Heart left ventricle (tissue), 16 donors: ENCODE measurements at regions of chrX and their contacts with region 1.

Region 1: DNA sequence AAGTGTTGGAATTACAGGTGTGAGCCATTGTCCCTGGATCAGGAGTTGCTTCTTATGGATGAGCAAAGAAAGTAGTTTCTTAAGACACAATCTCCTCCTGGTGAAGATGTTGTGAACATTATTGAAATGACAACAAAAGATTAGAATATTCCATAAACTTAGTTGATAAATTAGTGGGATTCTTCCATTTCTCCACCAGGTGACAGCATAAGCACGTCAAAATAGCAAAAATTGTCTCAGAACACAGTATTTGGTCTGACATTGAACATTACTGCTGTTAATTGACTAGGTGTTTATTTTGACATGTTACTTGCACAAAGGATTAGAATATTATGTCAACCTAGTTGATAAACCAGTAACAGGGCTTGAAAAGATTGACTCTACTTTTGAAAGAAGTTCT is 21.6 kb downstream of the CLDN34 start:
- DNase-seq: no peak
- ATAC-seq: no peak
- H3K4me3 ChIP-seq: no peak overlapping the region
- H3K27ac ChIP-seq: no peak overlapping the region
- H3K4me1 ChIP-seq: no peaks in the 10 kb centered on the region
- H3K27me3 ChIP-seq: no peaks in the 10 kb centered on the region
- CTCF ChIP-seq: peak in 11 of 12 donors; percentile 11 to 48 (median 34)
- POLR2A ChIP-seq: no peak

Region 2: DNA sequence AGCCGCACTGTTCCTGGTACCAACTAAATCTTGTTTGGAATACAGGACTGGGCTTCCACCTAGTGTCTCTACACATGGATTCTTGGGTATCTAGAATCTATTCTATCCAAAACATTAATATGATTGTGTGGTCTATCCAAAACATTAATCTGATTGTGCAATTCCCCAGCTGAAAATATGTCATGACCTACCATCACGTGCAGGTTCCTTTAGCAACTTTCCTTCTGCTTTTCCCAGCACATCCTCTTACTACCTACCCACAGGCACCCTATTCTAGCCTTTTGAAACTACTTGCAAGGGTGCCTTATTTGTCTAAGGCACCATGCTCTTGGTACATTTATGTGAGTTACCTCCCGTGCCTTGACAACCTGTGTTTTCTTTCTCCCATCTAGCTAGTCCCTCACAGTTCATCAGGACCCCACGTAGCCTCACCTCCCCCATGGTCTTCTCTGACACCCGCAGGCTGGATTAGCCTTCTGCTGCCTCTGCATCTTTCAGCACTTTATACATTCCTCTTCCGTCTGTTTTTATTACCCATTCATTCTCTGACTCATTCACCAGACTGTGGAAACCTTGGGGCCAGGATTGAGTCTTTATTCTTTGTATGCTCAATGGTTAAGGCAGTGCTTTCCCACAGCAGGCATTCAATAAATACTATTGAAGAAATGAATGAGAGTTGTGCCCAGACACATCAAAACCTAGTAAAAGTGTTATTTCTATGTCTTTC is 866.1 kb before region 1 on chrX:
- intact Hi-C with region 1: loop called in 1 of 10 experiments (anchors 10 kb)
- DNase-seq: no peak
- ATAC-seq: no peak
- H3K4me3 ChIP-seq: no peak overlapping the region
- H3K27ac ChIP-seq: no peak overlapping the region
- H3K4me1 ChIP-seq: no peaks in the 10 kb centered on the region
- H3K27me3 ChIP-seq: peaks cover 0 to 9% (median 0%) of the 10 kb centered on the region in 9 donors
- CTCF ChIP-seq: no peak
- POLR2A ChIP-seq: no peak

Region 3: DNA sequence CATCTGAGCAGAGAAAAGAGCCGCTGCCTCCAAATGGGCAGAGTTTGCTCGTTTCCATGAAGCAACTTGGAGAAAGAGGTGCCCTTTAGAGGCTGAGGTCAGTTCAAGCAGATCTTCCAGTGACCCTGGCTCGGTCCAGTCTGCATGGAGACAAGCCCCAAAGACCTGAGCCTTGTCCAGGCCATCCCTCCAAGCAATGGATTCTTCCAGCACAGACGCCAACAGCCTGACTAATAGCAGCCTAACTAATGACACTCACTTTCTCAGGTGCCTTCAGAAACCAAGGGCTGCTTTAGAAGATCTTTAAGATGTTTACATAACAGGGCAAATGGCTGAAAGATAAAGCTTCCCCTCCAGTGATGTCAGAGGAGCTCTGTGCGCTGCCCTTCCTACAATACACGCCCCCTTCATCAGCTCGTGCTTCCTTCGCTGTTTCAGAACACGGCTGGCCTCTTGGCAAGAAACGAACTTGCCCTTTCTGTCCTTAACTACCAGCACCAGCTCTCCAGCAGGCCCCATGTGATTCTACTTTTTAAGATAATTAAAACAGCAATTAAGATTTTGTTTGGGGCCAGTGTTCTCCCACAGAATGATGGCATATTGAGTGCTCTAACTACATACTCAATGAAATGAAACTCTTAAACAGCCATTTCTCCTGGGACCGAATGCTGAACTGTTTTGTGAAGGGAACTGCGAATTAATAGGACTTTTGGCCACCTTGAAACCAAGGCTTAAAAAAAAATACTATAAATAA is 342.1 kb before region 1 on chrX:
- intact Hi-C with region 1: no loop called
- DNase-seq: peak in 1 of 5 donors; percentile 19
- ATAC-seq: peak; percentile 65 to 75 (median 72)
- H3K4me3 ChIP-seq: no peak overlapping the region
- H3K27ac ChIP-seq: peak overlapping the region in 9 of 12 donors; percentile 3 to 57 (median 24)
- H3K4me1 ChIP-seq: peaks cover 0 to 27% (median 6%) of the 10 kb centered on the region in 12 donors
- H3K27me3 ChIP-seq: peaks cover 0 to 8% (median 0%) of the 10 kb centered on the region in 9 donors
- CTCF ChIP-seq: no peak
- POLR2A ChIP-seq: no peak

Region 4: GRCh38 chrX:9816094-9816700 is 172.6 kb before region 1 on chrX:
- intact Hi-C with region 1: no loop called
- DNase-seq: no peak
- ATAC-seq: peak in 1 of 4 donors; percentile 28
- H3K4me3 ChIP-seq: no peak overlapping the region
- H3K27ac ChIP-seq: no peak overlapping the region
- H3K4me1 ChIP-seq: no peaks in the 10 kb centered on the region
- H3K27me3 ChIP-seq: no peaks in the 10 kb centered on the region
- CTCF ChIP-seq: no peak
- POLR2A ChIP-seq: no peak

Region 5: DNA sequence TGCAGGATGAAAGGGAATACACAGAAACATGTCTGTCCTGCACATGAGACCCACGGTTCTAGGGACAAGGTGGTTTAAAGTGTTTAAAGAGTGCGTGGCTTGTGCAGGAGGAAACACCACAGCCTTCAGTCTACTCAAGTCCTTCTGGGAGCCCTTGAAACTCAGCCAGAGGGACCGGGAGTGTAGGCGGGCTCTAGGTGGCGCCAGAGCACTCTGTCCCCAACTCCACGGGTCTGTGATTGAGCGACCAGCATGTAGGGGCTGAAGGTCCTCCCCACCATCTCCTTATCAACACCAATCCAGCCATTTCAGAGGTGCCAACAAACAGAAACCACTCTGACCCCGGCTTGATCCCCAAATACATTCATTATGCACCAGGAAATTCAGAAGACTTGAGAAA is 103.6 kb before region 1 on chrX:
- intact Hi-C with region 1: loop called in 6 of 10 experiments (anchors 10 kb)
- DNase-seq: peak; percentile 29 to 75 (median 56)
- ATAC-seq: peak in 3 of 4 donors; percentile 67 to 78 (median 73)
- H3K4me3 ChIP-seq: no peak overlapping the region
- H3K27ac ChIP-seq: no peak overlapping the region
- H3K4me1 ChIP-seq: peaks cover 0 to 10% (median 0%) of the 10 kb centered on the region in 12 donors
- H3K27me3 ChIP-seq: peaks cover 0 to 25% (median 0%) of the 10 kb centered on the region in 9 donors
- CTCF ChIP-seq: peak; percentile 32 to 60 (median 48)
- POLR2A ChIP-seq: no peak

Region 6: DNA sequence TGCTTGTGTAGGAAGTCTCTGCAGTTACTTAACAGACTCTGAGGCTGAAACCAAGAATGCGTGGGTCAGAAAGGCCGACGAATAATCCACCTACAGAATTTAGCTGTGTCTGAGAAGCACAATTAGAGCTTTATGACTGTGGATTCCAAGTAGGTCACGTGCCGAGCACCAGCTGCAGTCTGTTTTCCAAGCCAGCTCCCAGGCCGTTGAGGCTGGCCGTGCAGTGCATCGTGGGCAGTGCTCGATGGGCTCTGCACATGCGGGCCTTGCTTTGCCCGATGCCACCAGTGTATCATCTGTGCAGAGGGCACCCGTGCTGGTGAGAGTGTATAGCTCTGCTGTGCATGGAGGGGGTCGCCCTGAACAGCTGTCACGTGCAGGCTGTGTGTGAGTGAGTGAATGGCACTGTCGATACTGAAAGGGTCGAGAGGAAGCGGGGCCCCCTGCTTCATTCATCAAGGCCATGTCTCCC is 89.1 kb before region 1 on chrX:
- intact Hi-C with region 1: loop called in 1 of 10 experiments (anchors 10 kb)
- DNase-seq: no peak
- ATAC-seq: peak in 2 of 4 donors; percentile 41 to 68
- H3K4me3 ChIP-seq: no peak overlapping the region
- H3K27ac ChIP-seq: no peak overlapping the region
- H3K4me1 ChIP-seq: no peaks in the 10 kb centered on the region
- H3K27me3 ChIP-seq: peaks cover 0 to 5% (median 0%) of the 10 kb centered on the region in 9 donors
- CTCF ChIP-seq: no peak
- POLR2A ChIP-seq: no peak

Region 7: GRCh38 chrX:10636337-10636736 is 647.6 kb after region 1 on chrX:
- intact Hi-C with region 1: loop called in 1 of 10 experiments (anchors 10 kb)
- DNase-seq: peak in 4 of 5 donors; percentile 15 to 32 (median 26)
- ATAC-seq: peak in 3 of 4 donors; percentile 67 to 75 (median 73)
- H3K4me3 ChIP-seq: peak overlapping the region in 4 of 12 donors; percentile 3 to 26 (median 14)
- H3K27ac ChIP-seq: peak overlapping the region in 3 of 12 donors; percentile 40 to 58 (median 57)
- H3K4me1 ChIP-seq: peaks cover 0 to 12% (median 0%) of the 10 kb centered on the region in 12 donors
- H3K27me3 ChIP-seq: no peaks in the 10 kb centered on the region
- CTCF ChIP-seq: peak in 11 of 12 donors; percentile 23 to 64 (median 57)
- POLR2A ChIP-seq: no peak